Endothelial cell of umbilical vein (primary cell): ENCODE measurements at regions of chr6 and their contacts with region 1.

Region 1: DNA sequence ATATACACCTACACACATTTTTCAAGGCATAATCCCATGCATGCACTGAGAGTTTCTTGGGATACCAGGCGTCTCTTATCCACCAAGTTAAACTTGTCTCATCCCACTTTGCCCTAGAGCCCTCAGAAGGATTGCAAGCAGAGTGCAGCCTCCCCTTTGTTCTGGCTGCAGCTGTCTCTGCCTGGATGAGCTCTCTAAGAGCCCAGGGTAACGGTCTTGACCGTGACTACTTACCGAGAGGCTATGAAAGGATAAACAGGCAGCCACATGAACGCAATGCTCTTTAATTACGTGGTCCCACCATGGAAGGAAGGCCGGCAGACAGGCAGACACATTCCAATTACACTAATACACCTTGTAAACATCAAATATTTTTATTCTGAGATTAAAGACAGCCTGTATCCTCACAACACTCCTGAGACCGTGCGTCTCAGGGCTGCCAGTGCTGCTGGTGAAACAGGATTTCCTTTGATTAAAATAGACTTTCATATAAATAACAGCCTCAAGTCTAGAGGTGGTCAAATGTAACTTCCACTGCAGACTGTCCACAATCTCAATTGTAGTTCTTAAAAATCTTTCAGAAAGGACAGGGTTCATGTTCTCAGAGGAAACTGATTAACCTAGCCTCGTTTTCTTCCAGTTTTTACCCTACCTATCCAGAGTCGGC is 210.0 kb upstream of the PRDM1 start:
- DNase-seq: no peak
- H3K4me3 ChIP-seq: no peak overlapping the region
- H3K27ac ChIP-seq: no peak overlapping the region
- H3K4me1 ChIP-seq: no peaks in the 10 kb centered on the region
- H3K27me3 ChIP-seq: no peaks in the 10 kb centered on the region
- CTCF ChIP-seq: no peak
- POLR2A ChIP-seq: no peak

Region 2: DNA sequence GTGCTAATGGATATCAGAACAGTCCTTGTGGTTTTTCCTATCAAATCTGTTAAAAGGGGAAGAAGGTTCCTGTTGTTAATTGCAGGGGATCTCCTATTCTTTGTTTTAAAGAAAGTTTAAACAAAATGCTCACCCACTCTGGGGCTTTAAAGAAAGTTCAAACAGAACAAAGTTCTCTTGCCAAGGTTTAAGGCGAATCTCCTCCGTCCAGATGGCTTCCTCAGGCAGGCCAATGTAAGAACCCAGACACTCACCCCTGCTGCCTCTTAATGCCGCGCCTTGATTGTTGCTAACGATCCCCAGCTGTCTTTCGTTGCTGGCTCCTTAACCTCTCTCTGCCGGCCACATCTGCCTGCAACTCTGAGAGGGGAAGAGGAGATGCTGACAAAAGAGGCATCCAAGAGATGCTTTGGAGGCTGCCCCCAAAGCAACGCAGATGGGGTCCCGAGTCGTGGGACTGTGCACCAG is 25.0 kb before region 1 on chr6:
- CTCF ChIA-PET with region 1: no interaction called
- POLR2A ChIA-PET with region 1: no interaction called
- dilution Hi-C with region 1: no loop called
- intact Hi-C with region 1: no loop called
- DNase-seq: no peak
- H3K4me3 ChIP-seq: no peak overlapping the region
- H3K27ac ChIP-seq: no peak overlapping the region
- H3K4me1 ChIP-seq: no peaks in the 10 kb centered on the region
- H3K27me3 ChIP-seq: no peaks in the 10 kb centered on the region
- CTCF ChIP-seq: no peak
- POLR2A ChIP-seq: no peak

Region 3: DNA sequence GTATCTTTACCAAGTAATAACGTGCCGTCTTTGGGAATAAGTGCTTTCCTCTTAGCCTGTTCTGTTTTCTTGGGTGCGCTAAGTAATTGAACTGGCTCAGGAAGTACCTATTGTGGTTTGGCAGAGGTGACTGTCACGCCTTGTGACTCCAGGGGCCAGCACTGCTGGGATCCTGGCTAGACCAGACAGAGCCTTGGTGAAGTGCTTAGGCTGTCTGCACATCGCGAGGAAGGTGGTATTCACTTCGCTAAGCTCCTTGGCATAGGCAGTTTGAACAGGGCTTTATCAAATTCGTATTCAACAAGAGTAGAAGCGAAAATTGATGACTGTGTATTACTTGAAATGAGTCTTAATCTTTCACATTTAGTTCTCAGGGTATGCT is 227.6 kb after region 1 on chr6:
- CTCF ChIA-PET with region 1: no interaction called
- POLR2A ChIA-PET with region 1: no interaction called
- dilution Hi-C with region 1: no loop called
- intact Hi-C with region 1: loop called (anchors 5 kb)
- DNase-seq: no peak
- H3K4me3 ChIP-seq: no peak overlapping the region
- H3K27ac ChIP-seq: no peak overlapping the region
- H3K4me1 ChIP-seq: peaks cover 4% of the 10 kb centered on the region
- H3K27me3 ChIP-seq: peaks cover 5 to 7% of the 10 kb centered on the region in 2 experiments
- CTCF ChIP-seq: no peak
- POLR2A ChIP-seq: no peak